ENCODE measurements at regions of chr12 and their contacts with region 1.

Region 1: DNA sequence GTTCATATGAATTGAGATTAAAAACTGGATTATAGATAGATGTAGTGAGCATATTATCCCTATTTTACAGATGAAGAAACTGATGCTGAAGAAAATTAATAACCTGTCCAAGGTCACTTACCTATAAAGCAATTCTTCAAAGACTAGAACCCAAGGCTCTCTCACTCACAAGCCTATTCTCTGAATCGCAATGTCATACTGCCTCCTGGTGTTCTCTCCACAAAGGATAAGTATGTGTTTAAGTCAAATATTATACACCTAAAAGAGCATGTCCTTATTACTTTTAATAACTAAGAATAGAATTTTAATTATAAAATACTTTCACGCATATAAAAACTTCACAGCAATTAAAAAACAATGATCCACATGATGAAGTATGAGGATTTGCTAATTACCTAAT is 721.3 kb upstream of the USP15 start:
- DNase-seq: peak; percentile 70
- H3K4me3 ChIP-seq: no peak overlapping the region
- H3K27ac ChIP-seq: no peak overlapping the region
- H3K4me1 ChIP-seq: peaks cover 11% of the 10 kb centered on the region
- CTCF ChIP-seq: peak; percentile 85

Region 2: DNA sequence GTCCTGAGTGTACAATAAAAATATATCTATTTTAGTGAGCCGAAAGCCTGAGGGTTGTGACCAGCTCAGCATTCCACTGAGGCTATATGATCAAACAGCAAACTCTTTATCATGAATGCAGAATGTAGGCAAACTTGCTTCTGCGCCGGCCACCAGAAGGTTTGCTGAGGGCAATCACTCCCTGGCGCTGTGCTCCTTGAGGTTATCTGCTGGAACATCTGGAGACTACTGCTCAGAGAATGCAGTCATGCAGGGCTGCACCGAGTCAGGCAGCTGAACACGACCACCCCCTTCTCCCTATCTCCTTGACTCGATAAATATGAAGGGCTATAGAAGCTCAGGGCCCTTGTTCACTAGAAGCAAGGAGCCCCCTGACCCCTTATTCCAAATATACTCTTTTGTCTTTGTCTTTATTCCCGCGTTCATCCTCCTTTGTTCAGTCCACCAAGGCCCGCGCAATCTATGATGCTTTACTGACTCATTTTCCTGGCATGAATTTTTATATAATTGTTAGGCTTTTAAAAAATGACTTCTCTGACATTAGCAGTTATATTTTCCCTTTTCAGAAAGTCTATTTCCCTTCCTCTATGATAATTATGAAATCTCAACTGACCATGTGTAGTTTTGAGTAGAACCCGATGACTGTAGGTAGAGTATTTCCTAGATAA is 853.8 kb before region 1 on chr12:
- CTCF ChIA-PET with region 1: no interaction called
- POLR2A ChIA-PET with region 1: no interaction called
- intact Hi-C with region 1: loop called (anchors 5 kb)
- DNase-seq: peak; percentile 3
- H3K4me3 ChIP-seq: no peak overlapping the region
- H3K27ac ChIP-seq: no peak overlapping the region
- H3K4me1 ChIP-seq: no peaks in the 10 kb centered on the region
- CTCF ChIP-seq: peak; percentile 64

Region 3: GRCh38 chr12:61490526-61491498 is 48.1 kb before region 1 on chr12:
- CTCF ChIA-PET with region 1: no interaction called
- POLR2A ChIA-PET with region 1: interaction called, 6 read pairs
- intact Hi-C with region 1: loop called (anchors 1 kb)
- DNase-seq: no peak
- H3K4me3 ChIP-seq: no peak overlapping the region
- H3K27ac ChIP-seq: no peak overlapping the region
- H3K4me1 ChIP-seq: peaks cover 9% of the 10 kb centered on the region
- CTCF ChIP-seq: no peak

Region 4: DNA sequence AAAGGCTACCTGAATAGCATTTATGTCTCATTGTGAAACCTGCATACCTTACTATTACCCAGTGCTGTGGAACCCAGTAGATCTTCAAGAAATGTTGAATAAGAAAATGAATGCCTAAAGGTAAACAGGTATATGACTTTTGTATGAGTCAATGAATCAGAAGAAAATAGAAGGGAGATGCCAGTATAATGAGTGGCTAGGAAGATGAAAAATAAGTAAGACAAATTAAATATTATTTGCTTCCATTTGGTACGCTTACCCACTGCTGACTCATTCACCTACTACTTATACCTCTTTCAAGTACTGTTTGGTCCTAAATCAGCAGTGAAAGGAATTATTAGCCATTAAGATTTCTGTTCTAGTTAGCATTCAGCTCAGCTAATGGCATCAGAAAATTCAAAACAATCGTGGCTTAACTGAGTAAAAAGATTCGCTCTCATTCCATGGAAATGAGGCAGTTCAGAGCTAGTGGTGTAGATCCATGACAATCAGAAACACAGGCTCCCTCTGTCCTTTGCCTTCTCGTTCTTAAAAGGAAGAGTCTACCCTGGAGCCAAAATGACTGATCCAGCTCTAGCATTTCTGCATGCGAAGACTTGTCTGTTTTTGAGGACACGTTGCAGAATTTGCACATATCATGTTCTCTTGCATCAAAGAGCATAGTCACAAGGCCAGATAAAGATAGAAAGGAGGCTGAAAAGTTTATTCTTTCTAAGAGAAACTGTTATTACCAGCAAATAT is 15.5 kb after region 1 on chr12:
- CTCF ChIA-PET with region 1: no interaction called
- POLR2A ChIA-PET with region 1: no interaction called
- intact Hi-C with region 1: no loop called
- DNase-seq: no peak
- H3K4me3 ChIP-seq: no peak overlapping the region
- H3K27ac ChIP-seq: no peak overlapping the region
- H3K4me1 ChIP-seq: no peaks in the 10 kb centered on the region
- CTCF ChIP-seq: no peak

Measured in OCI-LY7 (cell line).